Left cardiac atrium (tissue), 4 donors: ENCODE measurements at regions of chr22 and their contacts with region 1.

Region 1: GRCh38 chr22:39003165-39003638 is 10.9 kb upstream of the APOBEC3C start:
- DNase-seq: peak; percentile 81
- ATAC-seq: peak; percentile 92 to 96

Region 2: DNA sequence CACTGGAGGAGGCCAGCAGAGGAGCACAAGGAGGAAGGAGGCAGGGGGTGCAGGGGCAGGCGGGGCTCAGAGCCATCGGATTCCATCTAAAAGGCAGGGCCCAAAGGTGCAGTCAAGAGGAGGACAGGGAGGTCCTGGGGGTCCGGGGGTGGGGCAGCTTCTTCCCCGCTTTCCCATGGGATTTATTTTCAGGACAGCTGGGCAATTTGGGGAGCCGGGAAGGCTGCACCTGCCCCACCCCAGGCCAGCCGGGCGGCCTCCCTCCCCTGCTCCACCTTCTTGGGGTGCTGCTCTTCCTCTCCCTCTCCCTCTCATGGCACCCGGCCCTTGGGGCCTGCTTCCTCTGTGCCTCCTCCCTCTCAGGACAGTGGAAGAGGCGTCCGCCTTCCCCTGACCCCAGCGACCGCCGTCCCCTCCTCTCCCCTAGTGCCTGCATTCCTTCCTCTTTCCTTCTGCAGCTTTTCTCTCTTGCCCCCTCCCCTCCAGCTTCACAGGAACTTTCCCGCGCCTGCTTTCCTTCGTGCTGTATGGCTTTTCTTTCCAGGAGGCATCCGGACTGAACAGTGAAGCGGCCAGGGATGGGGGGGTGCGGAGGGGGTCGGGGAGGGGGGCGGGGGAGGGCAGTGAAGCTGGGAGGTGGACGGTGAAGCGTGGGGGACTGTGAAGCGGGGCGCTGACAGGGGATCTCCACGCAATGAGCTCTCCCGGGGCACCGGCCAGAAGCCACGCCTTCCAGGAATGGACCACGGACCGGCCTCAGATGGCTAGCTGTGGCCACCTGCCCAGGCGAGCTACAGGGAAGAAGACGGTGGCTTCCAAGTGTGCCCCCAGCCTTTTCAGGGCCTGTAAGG is 120.8 kb after region 1 on chr22:
- intact Hi-C with region 1: loop called (anchors 5 to 10 kb)
- DNase-seq: no peak
- ATAC-seq: peak in 1 of 2 donors; percentile 42